BJ (cell line): ENCODE measurements at regions of chr6 and their contacts with region 1.

Region 1: DNA sequence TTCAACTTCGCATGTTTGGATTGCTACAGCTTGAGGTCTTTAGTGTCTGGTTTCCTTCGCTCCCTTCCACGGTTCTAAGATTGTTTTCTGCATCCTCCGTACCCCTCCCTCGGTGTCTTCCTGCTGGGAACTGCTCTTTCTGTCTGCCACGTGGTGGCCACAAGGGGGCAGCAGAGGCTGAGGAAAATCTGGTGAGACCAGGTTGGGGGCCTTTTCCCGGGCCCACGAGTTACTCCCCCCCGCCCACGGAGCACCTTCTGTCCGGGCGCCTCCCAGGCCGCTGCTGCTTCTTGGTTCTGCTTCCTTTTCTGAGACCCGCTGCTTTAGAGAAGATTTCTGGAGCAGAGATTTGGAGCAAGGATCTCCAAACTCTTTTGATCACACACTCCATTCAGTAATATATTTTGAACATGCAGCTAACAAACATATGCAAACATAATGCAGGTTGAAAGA is 21.1 kb upstream of the NOTCH4 start:
- DNase-seq: peak; percentile 37
- H3K4me3 ChIP-seq: no peak overlapping the region
- H3K27me3 ChIP-seq: peaks cover 3% of the 10 kb centered on the region
- CTCF ChIP-seq: peak; percentile 94

Region 2: GRCh38 chr6:32255199-32256153 is 10.5 kb after region 1 on chr6:
- CTCF ChIA-PET with region 1: interaction called, 26 read pairs
- POLR2A ChIA-PET with region 1: interaction called, 3 read pairs
- DNase-seq: peak; percentile 54
- H3K4me3 ChIP-seq: peak overlapping the region; percentile 46
- H3K27me3 ChIP-seq: no peaks in the 10 kb centered on the region
- CTCF ChIP-seq: peak; percentile 93

Region 3: DNA sequence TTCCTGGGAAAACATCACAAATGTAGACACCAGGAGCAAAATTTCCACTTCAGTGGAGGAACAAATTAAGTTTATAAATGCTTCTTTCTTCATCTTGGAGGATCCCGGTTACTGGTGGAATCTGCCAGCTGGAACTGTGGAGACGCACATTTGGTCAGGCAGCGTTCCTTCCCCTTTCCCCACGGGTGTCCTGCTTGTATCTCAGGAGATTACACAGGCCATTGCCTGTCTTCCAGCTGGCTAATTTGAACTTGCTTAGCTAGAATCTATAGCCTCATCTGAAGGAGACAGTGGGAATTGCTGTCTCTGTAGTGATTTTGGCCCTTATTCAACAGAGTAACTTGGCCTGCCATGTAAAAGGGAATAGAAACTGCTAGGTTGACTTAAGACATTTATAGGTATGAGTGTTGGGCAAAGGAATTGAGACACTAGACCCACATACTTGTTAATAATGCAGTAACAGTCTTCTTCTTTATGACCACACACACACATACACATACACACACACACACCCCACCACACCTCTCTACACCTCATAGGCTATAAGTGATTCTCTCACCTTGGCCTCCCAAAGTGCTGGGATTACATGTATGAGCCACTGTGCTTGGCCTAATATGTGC is 92.3 kb after region 1 on chr6:
- CTCF ChIA-PET with region 1: no interaction called
- POLR2A ChIA-PET with region 1: no interaction called
- DNase-seq: no peak
- H3K4me3 ChIP-seq: no peak overlapping the region
- H3K27me3 ChIP-seq: no peaks in the 10 kb centered on the region; the same call in 1 of the 2 replicates
- CTCF ChIP-seq: no peak

Region 4: GRCh38 chr6:32439602-32440214 is 194.7 kb after region 1 on chr6 and contains the start of gene HLA-DRA:
- CTCF ChIA-PET with region 1: no interaction called
- POLR2A ChIA-PET with region 1: no interaction called
- DNase-seq: peak; percentile 6
- H3K4me3 ChIP-seq: no peak within 1 kb of the TSS
- H3K27me3 ChIP-seq: no peaks in the 10 kb centered on the region
- CTCF ChIP-seq: no peak
- polyA plus RNA-seq, gene HLA-DRA: not detected in 2 replicates